PC-3 (cell line): ENCODE measurements at regions of chr2 and their contacts with region 1.

Region 1: GRCh38 chr2:73013936-73014335 is 57.6 kb downstream of the SFXN5 start:
- DNase-seq: peak; percentile 71
- ATAC-seq: peak; percentile 95
- H3K4me3 ChIP-seq: no peak overlapping the region
- H3K27ac ChIP-seq: 0 out of 2 replicates have a peak overlapping the region, but pooled peaks have one; percentile 0
- H3K4me1 ChIP-seq: peaks cover 15% of the 10 kb centered on the region
- H3K27me3 ChIP-seq: no peaks in the 10 kb centered on the region
- CTCF ChIP-seq: no peak

Region 2: GRCh38 chr2:72813841-72814240 is 200.1 kb before region 1 on chr2:
- CTCF ChIA-PET with region 1: no interaction called
- POLR2A ChIA-PET with region 1: no interaction called
- intact Hi-C with region 1: no loop called
- DNase-seq: no peak
- ATAC-seq: no peak
- H3K4me3 ChIP-seq: no peak overlapping the region
- H3K27ac ChIP-seq: no peak overlapping the region
- H3K4me1 ChIP-seq: no peaks in the 10 kb centered on the region
- H3K27me3 ChIP-seq: no peaks in the 10 kb centered on the region
- CTCF ChIP-seq: no peak

Region 3: DNA sequence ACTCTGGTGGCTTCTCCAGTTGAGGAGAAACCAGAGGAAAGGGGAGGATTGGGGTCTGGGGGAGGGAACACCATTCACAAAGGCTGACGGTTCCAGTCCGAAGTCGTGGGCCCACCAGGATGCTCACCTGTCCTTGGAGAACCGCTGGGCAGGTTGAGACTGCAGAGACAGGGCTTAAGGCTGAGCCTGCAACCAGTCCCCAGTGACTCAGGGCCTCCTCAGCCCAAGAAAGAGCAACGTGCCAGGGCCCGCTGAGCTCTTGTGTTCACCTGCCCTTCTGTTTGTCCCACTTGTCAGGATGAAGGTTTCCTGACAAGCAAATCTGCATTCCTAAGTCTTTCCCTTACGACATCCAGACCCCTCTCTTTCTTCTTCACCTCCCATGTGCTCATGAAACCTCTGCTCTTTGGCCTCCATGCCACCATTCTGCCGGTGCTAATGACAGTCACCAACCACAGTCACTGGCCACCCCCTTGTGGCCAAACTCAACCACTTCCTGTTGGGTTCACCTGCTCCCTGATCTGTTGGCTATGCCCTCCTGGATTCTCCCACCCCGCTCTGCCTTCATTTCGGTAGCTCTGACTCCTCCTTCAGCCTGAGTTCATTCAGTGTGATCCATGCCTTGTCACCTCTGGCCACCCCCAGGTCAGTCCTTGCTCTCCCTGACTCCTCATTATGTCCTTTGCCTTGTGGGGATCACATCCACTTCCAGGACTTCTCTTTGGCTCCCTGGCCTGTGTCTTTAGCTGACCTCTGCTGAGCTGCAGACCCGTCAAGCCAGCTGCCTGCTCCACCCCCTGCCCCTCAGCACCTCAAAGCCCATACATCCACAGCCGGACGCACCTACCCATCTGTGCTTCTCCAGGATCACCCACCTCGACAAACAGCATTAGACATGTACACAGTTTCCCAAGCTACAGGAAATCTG is 79.0 kb before region 1 on chr2:
- CTCF ChIA-PET with region 1: no interaction called
- POLR2A ChIA-PET with region 1: no interaction called
- intact Hi-C with region 1: no loop called
- DNase-seq: peak; percentile 51
- ATAC-seq: peak; percentile 31
- H3K4me3 ChIP-seq: no peak overlapping the region
- H3K27ac ChIP-seq: no peak overlapping the region
- H3K4me1 ChIP-seq: peaks cover 9% of the 10 kb centered on the region
- H3K27me3 ChIP-seq: no peaks in the 10 kb centered on the region
- CTCF ChIP-seq: peak; percentile 61

Region 4: GRCh38 chr2:72999729-73000725 is 13.9 kb before region 1 on chr2:
- CTCF ChIA-PET with region 1: no interaction called
- POLR2A ChIA-PET with region 1: no interaction called
- intact Hi-C with region 1: loop called (anchors 1 kb)
- DNase-seq: peak; percentile 88
- ATAC-seq: peak; percentile 100
- H3K4me3 ChIP-seq: no peak overlapping the region
- H3K27ac ChIP-seq: peak overlapping the region; percentile 13; the same call in 1 of the 2 replicates
- H3K4me1 ChIP-seq: peaks cover 12% of the 10 kb centered on the region
- H3K27me3 ChIP-seq: no peaks in the 10 kb centered on the region
- CTCF ChIP-seq: no peak